ENCODE measurements at regions of chr6 and their contacts with region 1.

Region 1: DNA sequence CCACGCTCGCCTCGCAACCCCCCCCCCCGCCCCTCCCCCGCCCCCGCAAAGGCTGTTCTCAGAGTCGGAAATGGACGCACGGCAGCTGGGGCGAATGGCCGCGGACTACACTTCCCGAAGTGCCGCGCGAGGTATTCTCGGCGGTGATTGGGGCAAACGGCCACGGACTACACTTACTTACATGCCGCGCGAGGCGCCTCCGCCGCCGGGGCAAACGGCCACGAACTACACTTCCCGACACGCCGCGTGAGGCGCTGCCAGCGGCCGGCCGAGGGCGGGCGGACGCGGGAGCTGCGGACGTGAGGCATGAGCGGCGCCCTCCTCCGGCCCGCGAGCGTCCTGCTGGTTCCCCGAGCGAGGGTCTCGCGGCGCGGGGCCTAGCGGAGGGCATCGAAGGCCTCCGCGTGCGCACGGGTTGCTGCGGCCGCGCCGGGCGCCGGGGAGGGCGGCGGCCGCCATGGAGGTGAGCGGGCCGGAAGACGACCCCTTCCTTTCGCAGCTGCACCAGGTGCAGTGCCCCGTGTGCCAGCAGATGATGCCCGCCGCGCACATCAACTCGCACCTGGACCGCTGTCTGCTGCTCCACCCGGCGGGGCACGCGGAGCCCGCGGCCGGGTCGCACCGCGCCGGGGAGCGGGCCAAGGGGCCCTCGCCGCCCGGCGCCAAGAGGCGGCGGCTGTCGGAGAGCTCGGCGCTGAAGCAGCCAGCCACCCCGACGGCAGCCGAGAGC is at the start of gene WRNIP1:
- DNase-seq: peak; percentile 96
- H3K4me3 ChIP-seq: peak within 1 kb of the TSS; percentile 86 to 91
- H3K27ac ChIP-seq: peak within 1 kb of the TSS; percentile 91 to 96
- H3K4me1 ChIP-seq: peaks cover 11 to 25% of the 10 kb centered on the region in 2 experiments; a peak in 3 of 4 replicates
- H3K27me3 ChIP-seq: no peaks in the 10 kb centered on the region
- CTCF ChIP-seq: peak; percentile 55
- EP300 ChIP-seq: no peak
- RAD21 ChIP-seq: no peak
- polyA plus RNA-seq, gene WRNIP1: 47.5 and 49.0 TPM in 2 replicates

Region 2: DNA sequence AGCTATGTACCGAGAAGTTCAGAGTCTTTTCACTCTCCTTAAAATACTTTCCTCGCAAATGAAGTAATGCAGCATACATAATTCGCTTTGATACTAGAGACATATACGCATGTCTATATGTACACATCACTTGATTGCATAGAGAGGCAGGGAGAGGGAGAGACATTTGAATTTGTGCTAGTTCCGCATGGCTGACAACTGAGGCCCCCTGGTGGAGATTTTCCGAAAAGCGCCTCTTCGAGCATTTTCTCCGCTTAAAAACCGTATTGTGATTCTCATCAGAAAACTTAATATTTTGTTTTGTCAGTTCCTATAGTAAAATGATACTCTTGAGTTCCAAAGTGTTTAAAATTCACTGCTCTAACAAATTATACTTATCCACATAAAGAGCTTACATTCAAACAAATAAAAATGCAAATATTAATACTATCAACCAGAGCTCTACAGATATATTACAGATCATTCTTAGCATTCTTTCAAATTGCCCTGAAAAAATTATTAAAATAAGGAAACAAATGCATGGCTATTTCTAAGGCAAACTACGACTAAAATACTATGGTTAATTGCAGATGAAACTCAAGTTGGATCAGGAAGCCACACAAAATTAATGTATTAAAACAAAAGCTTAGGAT is 15.2 kb before region 1 on chr6:
- CTCF ChIA-PET with region 1: interaction called, 100 read pairs
- POLR2A ChIA-PET with region 1: no interaction called
- DNase-seq: peak; percentile 55
- H3K4me3 ChIP-seq: peak overlapping the region in 1 of 2 experiments; percentile 18; a peak in 1 of 4 replicates
- H3K27ac ChIP-seq: no peak overlapping the region
- H3K4me1 ChIP-seq: peaks cover 0 to 11% of the 10 kb centered on the region in 2 experiments; a peak in 3 of 4 replicates
- H3K27me3 ChIP-seq: no peaks in the 10 kb centered on the region
- CTCF ChIP-seq: peak; percentile 91
- EP300 ChIP-seq: no peak
- RAD21 ChIP-seq: peak; percentile 62

Region 3: GRCh38 chr6:2777250-2777649 is 11.9 kb after region 1 on chr6:
- CTCF ChIA-PET with region 1: interaction called, 24 read pairs
- POLR2A ChIA-PET with region 1: interaction called, 3 read pairs
- DNase-seq: no peak
- H3K4me3 ChIP-seq: no peak overlapping the region
- H3K27ac ChIP-seq: no peak overlapping the region; a peak in 1 of 4 replicates
- H3K4me1 ChIP-seq: no peaks in the 10 kb centered on the region
- H3K27me3 ChIP-seq: no peaks in the 10 kb centered on the region
- CTCF ChIP-seq: no peak
- EP300 ChIP-seq: no peak
- RAD21 ChIP-seq: no peak

Region 4: GRCh38 chr6:2783188-2783963 is 18.0 kb after region 1 on chr6:
- CTCF ChIA-PET with region 1: interaction called, 24 read pairs
- POLR2A ChIA-PET with region 1: interaction called, 3 read pairs
- DNase-seq: no peak
- H3K4me3 ChIP-seq: no peak overlapping the region
- H3K27ac ChIP-seq: no peak overlapping the region
- H3K4me1 ChIP-seq: no peaks in the 10 kb centered on the region; a peak in 1 of 4 replicates
- H3K27me3 ChIP-seq: no peaks in the 10 kb centered on the region
- CTCF ChIP-seq: no peak
- EP300 ChIP-seq: no peak
- RAD21 ChIP-seq: no peak

Region 5: DNA sequence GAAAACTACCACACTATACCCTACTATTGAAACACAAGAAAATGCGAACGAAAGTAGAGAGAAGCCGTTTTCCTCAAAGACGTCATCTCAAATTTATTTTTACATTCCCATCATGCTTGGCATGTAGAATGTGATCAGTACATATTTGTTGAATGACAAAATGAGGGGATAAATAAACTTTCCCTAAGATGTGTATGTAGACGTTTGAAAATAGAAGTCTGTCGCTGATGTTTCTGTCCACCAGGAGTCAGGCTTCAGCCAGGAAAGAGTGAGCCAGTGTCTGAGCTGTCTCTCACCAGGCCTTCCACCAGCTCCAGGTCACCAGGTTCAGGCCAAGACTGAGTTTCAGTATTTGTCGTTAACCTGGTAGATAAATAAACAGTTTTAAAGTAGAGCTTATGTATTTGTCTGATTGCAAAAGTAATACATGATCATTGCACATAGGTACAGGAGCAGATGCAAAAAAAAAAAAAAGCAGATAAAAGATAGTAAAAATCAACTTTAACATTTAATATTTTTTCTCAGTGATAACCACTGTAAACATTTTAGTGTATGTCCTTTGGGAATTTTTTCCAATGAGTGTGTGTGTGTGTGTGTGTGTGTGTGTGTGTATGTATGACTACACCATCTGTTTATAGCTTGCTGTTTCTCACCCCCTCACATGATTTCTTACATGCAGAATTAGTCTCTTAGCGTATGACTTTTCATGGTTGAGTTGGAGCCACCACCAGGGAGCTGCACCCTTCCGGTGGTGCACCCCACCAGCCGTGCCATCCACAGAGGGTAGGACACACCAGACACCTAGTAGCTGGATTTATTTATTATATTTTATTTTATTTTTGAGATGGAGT is 26.0 kb after region 1 on chr6:
- CTCF ChIA-PET with region 1: interaction called, 33 read pairs
- POLR2A ChIA-PET with region 1: no interaction called
- DNase-seq: peak; percentile 77
- H3K4me3 ChIP-seq: no peak overlapping the region
- H3K27ac ChIP-seq: peak overlapping the region; percentile 11 to 67; a peak in 3 of 4 replicates
- H3K4me1 ChIP-seq: peaks cover 4 to 9% of the 10 kb centered on the region in 2 experiments; a peak in 2 of 4 replicates
- H3K27me3 ChIP-seq: no peaks in the 10 kb centered on the region
- CTCF ChIP-seq: peak; percentile 80
- EP300 ChIP-seq: no peak
- RAD21 ChIP-seq: peak; percentile 93

Region 6: GRCh38 chr6:2841264-2842138 is 76.2 kb after region 1 on chr6 and contains the start of gene SERPINB1:
- CTCF ChIA-PET with region 1: interaction called, 14 read pairs
- POLR2A ChIA-PET with region 1: no interaction called
- DNase-seq: peak; percentile 82
- H3K4me3 ChIP-seq: peak within 1 kb of the TSS; percentile 45 to 47
- H3K27ac ChIP-seq: peak within 1 kb of the TSS; percentile 67 to 87
- H3K4me1 ChIP-seq: peaks cover 25 to 26% of the 10 kb centered on the region in 2 experiments; a peak in 3 of 4 replicates
- H3K27me3 ChIP-seq: no peaks in the 10 kb centered on the region
- CTCF ChIP-seq: no peak
- EP300 ChIP-seq: no peak
- RAD21 ChIP-seq: no peak
- polyA plus RNA-seq, gene SERPINB1: 9.4 and 10.9 TPM in 2 replicates

Region 7: DNA sequence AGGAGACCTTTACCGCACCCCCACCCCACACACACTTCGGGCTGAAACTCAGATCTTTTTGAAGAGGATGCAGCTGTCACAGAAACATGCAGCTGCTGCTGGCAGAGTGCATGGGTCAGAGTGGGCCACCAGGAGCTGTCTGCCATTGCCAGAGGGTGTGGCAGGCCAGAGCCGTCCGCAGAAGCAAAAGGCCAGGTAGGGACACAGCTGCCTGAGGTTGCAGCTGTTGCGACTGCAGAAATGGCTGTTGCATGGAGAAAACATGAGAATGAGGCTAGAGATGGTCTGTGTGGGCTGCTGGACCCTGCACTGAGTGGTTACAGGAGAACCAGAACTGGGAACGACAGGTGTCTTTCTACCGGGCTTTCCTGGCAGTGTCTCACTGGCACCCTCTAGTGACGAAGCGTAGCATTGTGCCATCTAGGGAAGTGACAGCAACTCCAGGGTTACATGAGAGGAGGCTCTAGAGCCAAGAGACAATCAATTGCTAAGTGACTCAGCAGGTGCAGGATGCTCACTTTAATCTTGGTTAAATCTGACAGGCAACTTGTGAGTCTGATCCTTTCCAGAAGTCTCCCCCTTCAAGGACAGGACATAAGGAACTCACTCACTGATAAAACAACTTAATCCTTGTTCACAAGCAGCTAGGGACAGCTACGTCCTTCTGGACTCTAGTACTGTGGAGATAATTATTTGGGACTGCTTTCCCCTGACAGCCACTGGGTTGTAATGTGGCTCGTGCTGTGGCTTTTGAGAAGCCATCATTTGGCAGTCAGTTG is 166.8 kb after region 1 on chr6:
- CTCF ChIA-PET with region 1: interaction called, 12 read pairs
- POLR2A ChIA-PET with region 1: no interaction called
- DNase-seq: peak; percentile 86
- H3K4me3 ChIP-seq: peak overlapping the region in 1 of 2 experiments; percentile 38; a peak in 1 of 4 replicates
- H3K27ac ChIP-seq: no peak overlapping the region
- H3K4me1 ChIP-seq: peaks cover 0 to 4% of the 10 kb centered on the region in 2 experiments; a peak in 1 of 4 replicates
- H3K27me3 ChIP-seq: no peaks in the 10 kb centered on the region
- CTCF ChIP-seq: peak; percentile 97
- EP300 ChIP-seq: no peak
- RAD21 ChIP-seq: peak; percentile 91

Measured in SK-N-SH (cell line).